ENCODE measurements at regions of chr17 and their contacts with region 1.

Region 1: DNA sequence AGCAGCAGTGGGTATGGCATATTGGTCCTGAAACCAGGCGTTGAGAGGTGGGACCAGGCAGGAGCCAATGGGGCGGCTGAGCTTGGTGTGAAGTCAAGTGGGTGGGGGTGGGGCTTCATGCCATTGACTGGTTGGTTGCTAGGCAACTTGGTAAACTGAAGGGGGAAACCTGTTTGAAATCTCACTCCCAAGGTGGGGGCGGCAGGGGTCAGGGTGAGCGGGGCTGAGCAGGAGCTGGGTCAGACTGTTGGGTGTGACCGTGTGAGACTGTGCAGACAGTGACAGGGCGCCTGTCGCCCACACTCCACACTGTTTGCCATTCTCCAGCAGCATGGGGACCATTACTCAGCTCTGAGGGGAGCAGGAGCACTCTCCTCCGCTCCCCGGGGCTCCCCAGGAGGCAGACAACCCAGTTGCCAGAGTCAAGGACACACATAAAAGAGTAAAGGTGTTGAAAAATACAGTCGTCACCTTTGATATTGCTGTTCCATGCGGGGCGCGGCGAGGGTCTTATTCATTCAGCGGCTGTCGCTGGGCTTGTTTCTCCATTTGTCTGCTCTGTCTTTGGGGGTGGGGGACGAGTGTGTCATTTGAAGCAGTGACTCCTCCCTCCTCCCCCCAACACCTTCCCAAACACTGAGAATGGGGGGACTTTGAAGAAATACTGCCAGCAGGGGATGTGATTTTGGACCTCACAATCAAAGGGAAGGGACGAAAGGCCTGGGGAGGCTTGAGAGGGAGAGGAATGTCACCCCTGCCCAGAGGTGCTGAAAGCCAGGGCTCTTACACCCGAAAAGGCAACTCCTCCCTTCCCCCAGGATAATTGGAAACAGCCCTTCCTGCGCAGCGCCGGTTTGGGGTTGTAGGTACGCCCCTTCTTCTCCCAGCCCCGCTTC is 1.2 kb upstream of the EFNB3 start:
- DNase-seq: no peak
- ATAC-seq: peak; percentile 35

Region 2: GRCh38 chr17:7786866-7787265 is 83.0 kb after region 1 on chr17:
- intact Hi-C with region 1: loop called (anchors 5 kb)
- DNase-seq: no peak
- ATAC-seq: no peak